Posterior vena cava (tissue), 2 donors: ENCODE measurements at regions of chr5 and their contacts with region 1.

Region 1: DNA sequence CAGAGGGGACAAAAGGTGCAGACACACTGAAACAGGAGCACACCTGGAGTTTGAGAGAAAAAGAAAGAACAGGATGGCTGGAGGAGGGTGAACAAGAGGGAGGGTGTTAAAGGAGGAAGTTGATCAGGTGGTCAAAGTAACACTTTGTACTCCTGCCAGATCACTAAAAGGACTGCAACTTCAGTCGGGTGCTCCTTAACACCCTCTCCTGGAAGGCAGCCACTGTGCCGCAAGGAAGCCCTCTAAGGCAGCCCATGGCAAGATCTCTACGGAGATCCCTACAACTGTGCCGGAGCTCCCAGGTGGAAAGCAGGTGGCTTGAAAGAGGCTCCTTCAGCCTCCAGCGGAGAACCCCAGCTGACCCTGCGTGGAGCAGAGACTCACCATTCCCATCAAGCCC is 124.4 kb upstream of the MSX2 start:
- DNase-seq: no peak

Region 2: DNA sequence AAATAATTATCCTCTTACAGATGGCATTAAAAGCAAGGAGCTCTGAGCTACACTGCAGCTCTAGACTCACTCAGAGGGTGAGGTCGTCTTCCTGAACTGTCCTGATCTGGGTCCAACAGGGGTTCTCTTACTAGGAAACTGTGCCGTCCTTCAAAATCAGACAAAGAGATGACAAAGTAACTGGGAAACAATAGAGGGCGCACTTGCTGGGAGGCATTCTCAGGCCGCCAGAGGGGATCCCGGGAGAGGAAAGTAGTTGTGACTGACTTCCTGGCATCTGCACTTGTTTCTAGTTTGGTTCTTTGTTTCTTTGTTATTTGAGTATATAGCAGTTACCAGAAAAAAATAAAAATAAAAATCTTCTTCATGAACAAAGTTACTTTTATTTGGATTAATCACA is 18.5 kb before region 1 on chr5:
- intact Hi-C with region 1: no loop called
- DNase-seq: no peak

Region 3: DNA sequence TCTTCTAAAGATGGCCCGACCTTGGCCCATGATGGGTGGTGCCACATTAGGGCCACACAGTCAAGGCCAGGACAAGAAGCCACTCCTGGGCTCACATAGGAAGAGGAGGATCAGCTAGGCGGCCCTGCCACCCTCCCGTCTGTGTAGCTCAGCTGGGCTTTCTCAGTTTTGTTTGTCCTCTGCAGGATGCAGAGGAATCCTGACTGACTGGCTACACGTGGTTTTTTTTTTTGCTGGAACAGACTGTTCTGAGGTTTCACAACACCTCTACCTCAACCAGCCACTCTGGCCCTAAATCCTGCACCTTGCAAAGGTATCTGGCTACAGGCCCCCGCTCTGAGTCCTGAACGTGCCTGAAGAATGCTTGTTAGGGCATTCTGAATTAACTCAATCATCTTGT is 36.1 kb after region 1 on chr5:
- intact Hi-C with region 1: loop called in 1 of 2 experiments (anchors 2 kb)
- DNase-seq: no peak